ENCODE measurements at regions of chr3 and their contacts with region 1.

Region 1: GRCh38 chr3:43503067-43503728 is 118.6 kb downstream of the ANO10 start:
- DNase-seq: no peak
- H3K4me3 Mint-ChIP-seq: no peak overlapping the region
- H3K27ac Mint-ChIP-seq: no peak overlapping the region
- H3K4me1 Mint-ChIP-seq: peaks cover 34% of the 10 kb centered on the region
- H3K27me3 Mint-ChIP-seq: no peaks in the 10 kb centered on the region

Region 2: DNA sequence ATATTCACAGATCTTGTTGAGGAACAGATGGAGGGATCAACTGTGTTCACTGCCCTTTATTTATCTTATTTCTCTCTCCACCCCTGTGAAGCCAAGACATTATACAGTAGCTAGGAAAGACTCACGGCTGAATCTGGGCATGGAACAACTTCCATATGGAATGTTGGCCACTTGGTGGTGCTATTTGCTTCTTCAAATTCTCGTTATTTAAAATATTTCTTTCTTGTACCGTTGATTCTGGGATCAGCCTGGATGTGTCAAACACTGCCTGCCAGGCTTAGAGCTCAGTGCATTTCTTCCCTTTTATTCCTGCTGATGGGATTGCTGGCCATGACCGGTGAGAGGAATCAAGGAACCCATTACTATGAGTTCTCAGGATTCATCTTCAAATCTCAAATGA is 541.6 kb before region 1 on chr3:
- intact Hi-C with region 1: loop called (anchors 2 kb)
- DNase-seq: no peak
- H3K4me3 Mint-ChIP-seq: no peak overlapping the region
- H3K27ac Mint-ChIP-seq: no peak overlapping the region
- H3K4me1 Mint-ChIP-seq: no peaks in the 10 kb centered on the region
- H3K27me3 Mint-ChIP-seq: peaks cover 2% of the 10 kb centered on the region

Region 3: GRCh38 chr3:43162230-43163084 is 340.7 kb before region 1 on chr3:
- intact Hi-C with region 1: loop called (anchors 1 kb)
- DNase-seq: peak; percentile 53
- H3K4me3 Mint-ChIP-seq: peak overlapping the region; percentile 72
- H3K27ac Mint-ChIP-seq: peak overlapping the region; percentile 83
- H3K4me1 Mint-ChIP-seq: peaks cover 23% of the 10 kb centered on the region
- H3K27me3 Mint-ChIP-seq: no peaks in the 10 kb centered on the region

Region 4: GRCh38 chr3:43378066-43378935 is 124.9 kb before region 1 on chr3:
- intact Hi-C with region 1: loop called (anchors 2 kb)
- DNase-seq: peak; percentile 52
- H3K4me3 Mint-ChIP-seq: no peak overlapping the region
- H3K27ac Mint-ChIP-seq: no peak overlapping the region
- H3K4me1 Mint-ChIP-seq: peaks cover 17% of the 10 kb centered on the region
- H3K27me3 Mint-ChIP-seq: peaks cover 4% of the 10 kb centered on the region

Region 5: DNA sequence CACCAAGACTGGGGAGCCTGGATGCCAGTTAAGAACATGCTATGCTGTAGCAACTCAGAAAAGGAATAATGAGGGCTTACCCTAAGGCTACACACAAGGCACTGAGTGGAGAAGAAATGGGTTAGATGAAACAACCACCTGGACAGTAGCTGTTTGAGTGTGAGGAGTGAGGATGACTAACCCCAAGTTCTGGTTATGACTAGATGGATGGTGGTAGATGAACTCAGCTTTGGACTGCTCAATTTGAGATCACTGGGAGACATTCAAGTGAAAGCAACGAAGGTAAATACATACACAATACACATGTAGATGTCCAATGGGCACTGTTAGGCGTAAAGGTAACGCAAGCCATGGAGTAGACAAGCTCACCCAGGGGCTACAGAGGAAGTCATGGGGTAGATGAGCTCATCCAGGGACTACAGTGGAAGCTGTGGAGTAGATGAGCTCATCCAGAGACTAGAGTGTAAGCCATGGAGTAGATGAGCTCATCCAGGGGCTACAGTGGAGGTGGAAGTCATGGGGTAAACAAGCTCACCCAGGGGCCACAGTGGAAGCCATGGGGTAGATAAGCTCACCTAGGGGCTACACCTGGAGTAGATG is 20.4 kb after region 1 on chr3:
- intact Hi-C with region 1: loop called (anchors 2 kb)
- DNase-seq: no peak
- H3K4me3 Mint-ChIP-seq: no peak overlapping the region
- H3K27ac Mint-ChIP-seq: no peak overlapping the region
- H3K4me1 Mint-ChIP-seq: no peaks in the 10 kb centered on the region
- H3K27me3 Mint-ChIP-seq: no peaks in the 10 kb centered on the region

Measured in activated T-helper 1 cell treated with anti-CD3 and anti-CD28 coated beads, Interleukin-12 subunit alpha, Interleukin-12 subunit beta, Interleukin-2, Interleukin-4 antibody, amounts not matched to agents 30 ng/mL and 10 ng/mL and 1 ng/mL, durations not matched to agents 14 hours and 24 hours and 36 hours (primary cell).